A673 (cell line): ENCODE measurements at regions of chr14 and their contacts with region 1.

Region 1: GRCh38 chr14:101774006-101774795 is 12.7 kb downstream of the PPP2R5C start:
- DNase-seq: no peak
- H3K4me3 ChIP-seq: no peak overlapping the region
- H3K27ac ChIP-seq: no peak overlapping the region
- H3K4me1 ChIP-seq: peaks cover 3% of the 10 kb centered on the region
- H3K27me3 ChIP-seq: no peaks in the 10 kb centered on the region
- CTCF ChIP-seq: no peak

Region 2: DNA sequence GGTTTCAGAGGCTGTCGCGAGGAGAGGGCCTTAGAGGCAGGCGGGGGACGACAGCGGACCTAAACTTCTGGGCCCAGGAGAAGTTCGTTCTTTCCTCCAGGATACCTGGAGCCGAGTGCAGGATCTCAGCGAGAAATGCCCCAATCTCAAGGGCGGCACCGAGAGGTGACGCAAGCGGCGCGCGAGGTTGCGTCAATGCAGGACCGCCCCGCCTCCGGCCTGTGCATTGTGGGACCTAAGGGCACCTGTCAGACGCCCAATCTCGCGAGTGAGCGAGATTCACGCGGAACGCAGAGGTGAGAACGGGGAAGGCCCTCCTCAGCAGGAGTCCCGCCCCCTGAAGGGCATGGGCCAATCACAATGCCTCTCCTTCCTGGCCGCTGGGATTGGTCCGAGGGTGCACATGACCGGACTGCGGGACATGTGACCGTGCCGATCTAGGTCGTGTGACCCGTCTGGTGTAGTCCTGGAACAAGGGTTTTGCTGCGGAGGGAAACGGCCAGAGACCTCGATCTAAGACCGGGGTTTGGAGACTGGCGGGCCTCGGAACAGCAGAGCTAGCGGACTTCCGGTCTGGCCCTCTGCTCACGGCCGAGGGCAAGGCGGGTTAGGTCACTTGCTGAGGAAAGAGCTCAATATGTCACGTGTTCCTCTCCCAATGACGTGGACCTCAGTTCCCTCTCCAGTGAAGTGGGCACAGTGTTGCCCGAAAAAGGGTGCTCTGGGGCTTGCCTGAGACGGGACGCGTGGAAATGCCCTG is 173.9 kb after region 1 on chr14:
- CTCF ChIA-PET with region 1: interaction called, 12 read pairs
- POLR2A ChIA-PET with region 1: no interaction called
- intact Hi-C with region 1: no loop called
- DNase-seq: peak; percentile 100
- H3K4me3 ChIP-seq: peak overlapping the region; percentile 81
- H3K27ac ChIP-seq: peak overlapping the region; percentile 98
- H3K4me1 ChIP-seq: no peaks in the 10 kb centered on the region
- H3K27me3 ChIP-seq: no peaks in the 10 kb centered on the region
- CTCF ChIP-seq: no peak